IMR-90 (cell line): ENCODE measurements at regions of chr2 and their contacts with region 1.

Region 1: DNA sequence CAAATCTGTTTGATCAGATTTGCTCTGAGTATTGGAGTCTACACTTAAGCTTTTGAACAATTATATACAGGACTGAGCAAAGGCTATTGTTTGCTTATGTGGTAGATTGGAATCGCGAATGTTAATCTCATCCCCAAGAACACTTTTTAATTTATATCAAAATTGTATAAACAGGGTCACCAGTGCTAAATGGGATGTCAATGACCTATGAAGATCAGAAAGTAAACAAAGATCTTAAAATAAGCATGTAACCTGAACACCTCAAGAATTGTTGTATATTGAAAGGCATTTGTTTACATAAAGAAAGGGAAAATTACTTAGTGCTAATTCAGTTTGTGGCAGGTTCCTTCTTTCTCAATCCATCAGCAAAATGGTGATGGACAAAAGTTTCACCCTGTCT is 205.6 kb downstream of the MEIS1 start:
- DNase-seq: no peak
- ATAC-seq: no peak
- H3K4me3 ChIP-seq: no peak overlapping the region
- H3K27ac ChIP-seq: no peak overlapping the region
- H3K4me1 ChIP-seq: no peaks in the 10 kb centered on the region
- H3K27me3 ChIP-seq: no peaks in the 10 kb centered on the region
- CTCF ChIP-seq: no peak
- POLR2A ChIP-seq: no peak
- RAD21 ChIP-seq: no peak

Region 2: GRCh38 chr2:66699793-66700676 is 59.6 kb after region 1 on chr2:
- CTCF ChIA-PET with region 1: no interaction called
- POLR2A ChIA-PET with region 1: no interaction called
- dilution Hi-C with region 1: no loop called
- in situ Hi-C with region 1: no loop called
- intact Hi-C with region 1: loop called (anchors 5 kb)
- DNase-seq: no peak
- ATAC-seq: no peak
- H3K4me3 ChIP-seq: no peak overlapping the region
- H3K27ac ChIP-seq: no peak overlapping the region
- H3K4me1 ChIP-seq: peaks cover 3% of the 10 kb centered on the region; the same call in 1 of the 2 replicates
- H3K27me3 ChIP-seq: no peaks in the 10 kb centered on the region
- CTCF ChIP-seq: no peak
- POLR2A ChIP-seq: no peak
- RAD21 ChIP-seq: no peak

Region 3: GRCh38 chr2:67048314-67048713 is 407.8 kb after region 1 on chr2:
- CTCF ChIA-PET with region 1: no interaction called
- POLR2A ChIA-PET with region 1: no interaction called
- dilution Hi-C with region 1: no loop called
- in situ Hi-C with region 1: no loop called
- intact Hi-C with region 1: no loop called
- DNase-seq: no peak
- ATAC-seq: no peak
- H3K4me3 ChIP-seq: no peak overlapping the region
- H3K27ac ChIP-seq: no peak overlapping the region
- H3K4me1 ChIP-seq: peaks cover 1% of the 10 kb centered on the region; the same call in 1 of the 2 replicates
- H3K27me3 ChIP-seq: no peaks in the 10 kb centered on the region
- CTCF ChIP-seq: no peak
- POLR2A ChIP-seq: no peak
- RAD21 ChIP-seq: no peak

Region 4: GRCh38 chr2:67075530-67076238 is 435.2 kb after region 1 on chr2:
- CTCF ChIA-PET with region 1: no interaction called
- POLR2A ChIA-PET with region 1: no interaction called
- dilution Hi-C with region 1: no loop called
- in situ Hi-C with region 1: no loop called
- intact Hi-C with region 1: no loop called
- DNase-seq: no peak
- ATAC-seq: no peak
- H3K4me3 ChIP-seq: no peak overlapping the region
- H3K27ac ChIP-seq: no peak overlapping the region
- H3K4me1 ChIP-seq: peaks cover 2% of the 10 kb centered on the region; the same call in 1 of the 2 replicates
- H3K27me3 ChIP-seq: no peaks in the 10 kb centered on the region
- CTCF ChIP-seq: no peak
- POLR2A ChIP-seq: no peak
- RAD21 ChIP-seq: no peak